ENCODE measurements at regions of chrX and their contacts with region 1.

Region 1: GRCh38 chrX:8971116-8971515 is 62.8 kb downstream of the FAM9B start:
- DNase-seq: no peak
- ATAC-seq: peak; percentile 63
- H3K4me3 Mint-ChIP-seq: no peak overlapping the region
- H3K27ac Mint-ChIP-seq: no peak overlapping the region
- H3K4me1 Mint-ChIP-seq: no peaks in the 10 kb centered on the region
- H3K27me3 Mint-ChIP-seq: no peaks in the 10 kb centered on the region

Region 2: GRCh38 chrX:9207142-9207541 is 236.0 kb after region 1 on chrX:
- CTCF ChIA-PET with region 1: no interaction called
- POLR2A ChIA-PET with region 1: no interaction called
- intact Hi-C with region 1: no loop called
- DNase-seq: no peak
- ATAC-seq: no peak
- H3K4me3 Mint-ChIP-seq: no peak overlapping the region
- H3K27ac Mint-ChIP-seq: no peak overlapping the region
- H3K4me1 Mint-ChIP-seq: no peaks in the 10 kb centered on the region
- H3K27me3 Mint-ChIP-seq: peaks cover 2% of the 10 kb centered on the region

Region 3: GRCh38 chrX:9312922-9313867 is 342.1 kb after region 1 on chrX:
- CTCF ChIA-PET with region 1: no interaction called
- POLR2A ChIA-PET with region 1: no interaction called
- intact Hi-C with region 1: loop called in 1 of 2 experiments (anchors 2 kb)
- DNase-seq: peak; percentile 82
- ATAC-seq: peak; percentile 86
- H3K4me3 Mint-ChIP-seq: no peak overlapping the region
- H3K27ac Mint-ChIP-seq: no peak overlapping the region
- H3K4me1 Mint-ChIP-seq: peaks cover 10% of the 10 kb centered on the region
- H3K27me3 Mint-ChIP-seq: no peaks in the 10 kb centered on the region

Region 4: DNA sequence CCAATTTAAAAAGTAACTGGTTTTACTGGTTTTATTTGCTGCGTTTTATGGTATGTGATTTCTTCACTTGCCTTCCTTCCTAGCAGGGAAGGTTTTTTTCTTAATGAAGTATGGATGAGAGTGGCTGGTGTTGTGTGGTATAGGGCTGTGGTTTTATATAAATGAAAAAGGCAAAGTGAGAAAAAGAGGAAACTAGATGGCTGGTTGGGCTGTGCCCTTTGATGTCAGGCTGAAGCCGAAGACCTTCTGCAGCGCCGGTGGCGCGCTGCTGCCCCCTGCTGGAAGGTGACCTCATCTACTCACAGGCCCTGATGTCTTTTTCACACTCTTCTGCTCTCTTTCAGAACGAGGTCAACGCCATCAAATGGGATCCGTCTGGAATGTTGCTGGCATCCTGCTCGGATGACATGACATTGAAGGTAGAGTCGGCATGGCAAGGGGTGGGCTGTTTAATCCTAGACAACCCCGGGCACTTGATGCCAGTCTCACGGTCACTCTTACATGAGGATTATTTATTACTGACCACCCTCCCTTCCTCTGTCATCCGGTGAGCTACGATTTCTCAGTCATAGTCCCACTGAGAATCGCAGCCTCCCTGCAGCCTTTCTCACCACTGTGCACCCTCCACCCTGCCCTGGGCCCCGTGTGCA is 737.9 kb after region 1 on chrX:
- CTCF ChIA-PET with region 1: no interaction called
- POLR2A ChIA-PET with region 1: no interaction called
- intact Hi-C with region 1: loop called (anchors 1 kb)
- DNase-seq: peak; percentile 84
- ATAC-seq: peak; percentile 78
- H3K4me3 Mint-ChIP-seq: no peak overlapping the region
- H3K27ac Mint-ChIP-seq: no peak overlapping the region
- H3K4me1 Mint-ChIP-seq: peaks cover 6% of the 10 kb centered on the region
- H3K27me3 Mint-ChIP-seq: no peaks in the 10 kb centered on the region